ENCODE measurements at regions of chr2 and their contacts with region 1.

Region 1: DNA sequence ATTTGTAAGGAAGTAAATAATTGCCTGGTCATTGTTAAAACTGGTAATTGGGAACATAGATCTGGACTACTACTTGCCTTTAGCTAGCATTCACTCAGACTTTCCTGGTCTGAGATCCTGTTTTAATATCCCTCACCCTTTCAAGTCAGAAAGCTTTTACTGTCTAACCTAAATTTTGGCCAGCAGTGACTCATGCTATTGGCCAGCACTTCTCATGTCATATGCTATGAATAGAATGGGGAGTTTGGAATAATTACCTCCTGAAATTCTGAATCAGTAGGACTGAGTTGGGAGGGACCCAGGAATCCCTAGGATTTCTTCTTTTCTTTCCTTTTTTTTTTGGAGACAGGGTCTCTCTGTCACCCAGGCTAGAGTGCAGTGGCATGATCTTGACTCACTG is 19.3 kb downstream of the STK36 start:
- DNase-seq: no peak
- ATAC-seq: no peak
- H3K4me3 ChIP-seq: no peak overlapping the region
- H3K27ac ChIP-seq: no peak overlapping the region
- H3K4me1 ChIP-seq: no peaks in the 10 kb centered on the region
- H3K27me3 ChIP-seq: no peaks in the 10 kb centered on the region
- CTCF ChIP-seq: no peak
- POLR2A ChIP-seq: no peak
- RAD21 ChIP-seq: no peak

Region 2: DNA sequence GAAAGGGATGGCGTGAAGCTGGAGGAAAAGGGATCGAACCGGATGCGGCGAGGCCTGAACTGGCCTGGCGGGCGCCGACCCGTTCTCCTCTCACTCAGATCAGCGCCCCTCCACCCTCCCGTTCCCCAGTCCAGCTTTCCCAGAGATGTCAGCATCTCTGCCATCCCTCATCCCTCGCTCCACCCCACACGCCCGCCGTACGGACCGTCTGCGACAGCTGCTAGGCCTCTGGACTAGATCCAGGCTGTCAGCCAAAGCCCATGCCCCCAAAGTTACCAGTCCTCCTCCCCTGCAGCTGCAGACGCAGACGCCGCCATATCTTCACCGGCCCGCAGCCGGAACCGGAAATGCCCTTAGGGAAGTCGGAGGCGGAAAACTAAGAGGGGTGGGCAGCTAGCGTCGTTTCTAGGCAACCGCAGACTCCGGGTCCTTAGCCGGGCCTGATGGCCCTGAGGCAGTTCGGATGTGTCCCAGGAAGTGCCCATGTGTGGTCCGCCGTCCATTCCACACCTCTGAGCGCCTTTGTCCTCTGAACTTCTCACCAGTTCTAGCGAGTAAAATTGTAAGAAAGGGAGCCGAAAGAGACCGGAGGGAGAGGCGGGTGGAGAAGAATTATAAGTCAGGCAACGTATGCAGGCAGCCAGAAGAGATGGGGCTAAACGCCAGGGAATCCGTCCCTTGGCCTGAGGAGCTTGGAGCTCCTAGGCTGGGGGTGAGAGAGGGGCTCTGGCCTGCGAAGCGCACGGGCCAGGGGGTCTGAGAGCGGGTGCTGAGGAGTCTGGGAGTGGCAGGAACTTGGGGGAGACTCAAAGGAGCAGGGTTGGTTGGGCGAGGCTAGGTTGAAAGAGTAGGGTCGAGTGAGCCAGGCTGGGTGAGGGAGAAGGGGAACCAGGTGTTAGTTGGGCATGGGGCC is 19.3 kb before region 1 on chr2 and contains the starts of genes RNF25 and STK36:
- CTCF ChIA-PET with region 1: interaction called, 14 read pairs
- POLR2A ChIA-PET with region 1: no interaction called
- RAD21 ChIA-PET with region 1: no interaction called
- intact Hi-C with region 1: no loop called
- DNase-seq: peak; percentile 78
- ATAC-seq: peak; percentile 96
- H3K4me3 ChIP-seq: peak within 1 kb of the TSS; percentile 74 to 89
- H3K27ac ChIP-seq: peak within 1 kb of the TSS; percentile 74
- H3K4me1 ChIP-seq: peaks cover 11 to 13% of the 10 kb centered on the region in 2 experiments; a peak in 2 of 4 replicates
- H3K27me3 ChIP-seq: no peaks in the 10 kb centered on the region
- CTCF ChIP-seq: no peak
- POLR2A ChIP-seq: peak; percentile 44
- RAD21 ChIP-seq: no peak
- total RNA-seq, gene RNF25: 23.4 TPM
- total RNA-seq, gene STK36: 45.5 TPM

Measured in HCT116 (cell line).